CD8-positive, alpha-beta T cell (primary cell): ENCODE measurements at regions of chr15 and their contacts with region 1.

Region 1: GRCh38 chr15:40906091-40906990 is 12.1 kb downstream of the VPS18 start:
- DNase-seq: peak; percentile 50 to 84 (median 76)
- ATAC-seq: peak; percentile 63
- H3K4me3 ChIP-seq: peak overlapping the region; percentile 68 to 80
- H3K4me3 Mint-ChIP-seq: peak overlapping the region; percentile 83
- H3K27ac ChIP-seq: peak overlapping the region; percentile 19 to 82
- H3K27ac Mint-ChIP-seq: peak overlapping the region; percentile 87
- H3K4me1 ChIP-seq: peaks cover 18% of the 10 kb centered on the region
- H3K4me1 Mint-ChIP-seq: peaks cover 38% of the 10 kb centered on the region
- H3K27me3 ChIP-seq: no peaks in the 10 kb centered on the region
- H3K27me3 Mint-ChIP-seq: no peaks in the 10 kb centered on the region
- CTCF ChIP-seq: peak; percentile 85

Region 2: DNA sequence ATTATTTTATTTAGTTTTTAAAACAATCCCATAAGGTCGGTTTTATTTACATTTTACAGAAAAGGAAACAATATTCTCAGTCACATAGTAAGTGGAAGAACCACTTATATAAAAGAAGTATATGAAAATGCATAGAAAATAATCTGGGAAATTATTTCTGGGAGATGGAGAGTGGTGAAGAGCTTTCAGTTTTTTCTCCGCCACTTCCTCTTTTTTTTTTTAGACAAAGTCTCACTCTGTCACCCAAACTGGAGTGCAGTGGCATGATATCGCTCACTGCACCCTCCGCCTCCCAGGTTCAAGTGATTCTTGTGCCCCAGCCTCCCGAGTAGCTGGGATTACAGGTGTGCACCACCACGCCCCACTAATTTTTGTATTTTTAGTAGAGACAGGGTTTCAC is 190.2 kb before region 1 on chr15:
- CTCF ChIA-PET with region 1: no interaction called
- POLR2A ChIA-PET with region 1: no interaction called
- intact Hi-C with region 1: no loop called
- DNase-seq: no peak
- ATAC-seq: no peak
- H3K4me3 ChIP-seq: no peak overlapping the region
- H3K4me3 Mint-ChIP-seq: no peak overlapping the region
- H3K27ac ChIP-seq: no peak overlapping the region
- H3K27ac Mint-ChIP-seq: no peak overlapping the region
- H3K4me1 ChIP-seq: no peaks in the 10 kb centered on the region
- H3K4me1 Mint-ChIP-seq: no peaks in the 10 kb centered on the region
- H3K27me3 ChIP-seq: no peaks in the 10 kb centered on the region
- H3K27me3 Mint-ChIP-seq: no peaks in the 10 kb centered on the region
- CTCF ChIP-seq: no peak

Region 3: GRCh38 chr15:40857601-40858341 is 48.6 kb before region 1 on chr15:
- CTCF ChIA-PET with region 1: interaction called, 108 read pairs
- POLR2A ChIA-PET with region 1: no interaction called
- intact Hi-C with region 1: loop called in 1 of 2 experiments (anchors 1 kb)
- DNase-seq: peak; percentile 70 to 87 (median 79)
- ATAC-seq: peak; percentile 97
- H3K4me3 ChIP-seq: no peak overlapping the region
- H3K4me3 Mint-ChIP-seq: no peak overlapping the region
- H3K27ac ChIP-seq: no peak overlapping the region
- H3K27ac Mint-ChIP-seq: no peak overlapping the region
- H3K4me1 ChIP-seq: peaks cover 5% of the 10 kb centered on the region
- H3K4me1 Mint-ChIP-seq: no peaks in the 10 kb centered on the region
- H3K27me3 ChIP-seq: no peaks in the 10 kb centered on the region
- H3K27me3 Mint-ChIP-seq: no peaks in the 10 kb centered on the region
- CTCF ChIP-seq: peak; percentile 79

Region 4: GRCh38 chr15:40941528-40942336 is 35.4 kb after region 1 on chr15:
- CTCF ChIA-PET with region 1: interaction called, 88 read pairs
- POLR2A ChIA-PET with region 1: interaction called, 15 read pairs
- intact Hi-C with region 1: loop called in 1 of 2 experiments (anchors 2 kb)
- DNase-seq: peak in 8 of 9 experiments; percentile 56 to 84 (median 66)
- ATAC-seq: peak; percentile 72
- H3K4me3 ChIP-seq: peak overlapping the region; percentile 69 to 78
- H3K4me3 Mint-ChIP-seq: peak overlapping the region; percentile 86
- H3K27ac ChIP-seq: peak overlapping the region; percentile 30 to 64
- H3K27ac Mint-ChIP-seq: peak overlapping the region; percentile 30
- H3K4me1 ChIP-seq: peaks cover 29% of the 10 kb centered on the region
- H3K4me1 Mint-ChIP-seq: peaks cover 37% of the 10 kb centered on the region
- H3K27me3 ChIP-seq: no peaks in the 10 kb centered on the region
- H3K27me3 Mint-ChIP-seq: no peaks in the 10 kb centered on the region
- CTCF ChIP-seq: peak; percentile 40

Region 5: DNA sequence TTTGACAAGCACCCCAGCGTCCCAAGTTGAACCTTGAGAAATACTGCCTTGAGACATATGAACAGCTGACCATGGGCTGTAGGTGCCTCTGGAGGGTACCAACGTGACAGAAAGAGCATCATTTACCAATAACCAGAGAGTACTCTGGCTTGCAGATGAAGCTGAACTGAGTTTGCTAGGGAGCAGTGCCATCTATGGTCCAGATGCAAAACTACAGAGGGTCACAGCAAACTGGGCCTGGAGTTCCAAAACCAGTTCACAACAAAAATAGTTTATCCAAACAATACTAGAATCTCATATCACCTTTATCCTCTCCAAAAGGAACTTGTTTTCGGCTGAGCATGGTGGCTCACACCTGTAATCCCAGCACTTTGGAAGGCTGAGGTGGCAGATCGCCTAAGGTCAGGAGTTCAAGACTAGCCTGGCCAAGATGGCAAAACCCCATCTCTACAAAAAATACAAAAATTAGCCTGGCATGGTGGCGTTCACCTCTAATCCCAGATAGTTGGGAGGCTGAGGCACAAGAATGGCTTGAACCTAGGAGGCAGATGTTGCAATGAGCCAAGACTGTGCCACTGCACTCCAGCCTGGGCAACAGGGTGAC is 116.2 kb after region 1 on chr15:
- CTCF ChIA-PET with region 1: interaction called, 120 read pairs
- POLR2A ChIA-PET with region 1: interaction called, 4 read pairs
- intact Hi-C with region 1: loop called (anchors 1 kb)
- DNase-seq: peak; percentile 1 to 65 (median 32)
- ATAC-seq: peak; percentile 72
- H3K4me3 ChIP-seq: no peak overlapping the region
- H3K4me3 Mint-ChIP-seq: no peak overlapping the region
- H3K27ac ChIP-seq: no peak overlapping the region
- H3K27ac Mint-ChIP-seq: no peak overlapping the region
- H3K4me1 ChIP-seq: no peaks in the 10 kb centered on the region
- H3K4me1 Mint-ChIP-seq: peaks cover 1% of the 10 kb centered on the region
- H3K27me3 ChIP-seq: no peaks in the 10 kb centered on the region
- H3K27me3 Mint-ChIP-seq: no peaks in the 10 kb centered on the region
- CTCF ChIP-seq: peak; percentile 66

Region 6: GRCh38 chr15:41180206-41180789 is 274.0 kb after region 1 on chr15:
- CTCF ChIA-PET with region 1: interaction called, 12 read pairs
- POLR2A ChIA-PET with region 1: interaction called, 3 read pairs
- intact Hi-C with region 1: loop called (anchors 1 kb)
- DNase-seq: no peak
- ATAC-seq: no peak
- H3K4me3 ChIP-seq: no peak overlapping the region
- H3K4me3 Mint-ChIP-seq: no peak overlapping the region
- H3K27ac ChIP-seq: no peak overlapping the region
- H3K27ac Mint-ChIP-seq: no peak overlapping the region
- H3K4me1 ChIP-seq: no peaks in the 10 kb centered on the region
- H3K4me1 Mint-ChIP-seq: no peaks in the 10 kb centered on the region
- H3K27me3 ChIP-seq: no peaks in the 10 kb centered on the region
- H3K27me3 Mint-ChIP-seq: peaks cover 3% of the 10 kb centered on the region
- CTCF ChIP-seq: no peak

Region 7: GRCh38 chr15:41331833-41332787 is 425.8 kb after region 1 on chr15 and contains the start of gene OIP5:
- CTCF ChIA-PET with region 1: no interaction called
- POLR2A ChIA-PET with region 1: no interaction called
- intact Hi-C with region 1: loop called (anchors 2 to 5 kb)
- DNase-seq: peak; percentile 95 to 100 (median 96)
- ATAC-seq: peak; percentile 96
- H3K4me3 ChIP-seq: peak within 1 kb of the TSS; percentile 84 to 94
- H3K4me3 Mint-ChIP-seq: peak within 1 kb of the TSS; percentile 97
- H3K27ac ChIP-seq: peak within 1 kb of the TSS; percentile 46 to 63
- H3K27ac Mint-ChIP-seq: peak within 1 kb of the TSS; percentile 87
- H3K4me1 ChIP-seq: peaks cover 14% of the 10 kb centered on the region
- H3K4me1 Mint-ChIP-seq: peaks cover 30% of the 10 kb centered on the region
- H3K27me3 ChIP-seq: no peaks in the 10 kb centered on the region
- H3K27me3 Mint-ChIP-seq: no peaks in the 10 kb centered on the region
- CTCF ChIP-seq: peak; percentile 58
- total RNA-seq, gene OIP5: not detected